PC-9 (cell line): ENCODE measurements at regions of chr1 and their contacts with region 1.

Region 1: GRCh38 chr1:190633488-190633887 is 155.8 kb upstream of the BRINP3 start:
- DNase-seq: no peak
- H3K4me3 ChIP-seq: no peak overlapping the region
- H3K27ac ChIP-seq: no peak overlapping the region
- H3K4me1 ChIP-seq: no peaks in the 10 kb centered on the region
- H3K27me3 ChIP-seq: no peaks in the 10 kb centered on the region
- CTCF ChIP-seq: no peak

Region 2: DNA sequence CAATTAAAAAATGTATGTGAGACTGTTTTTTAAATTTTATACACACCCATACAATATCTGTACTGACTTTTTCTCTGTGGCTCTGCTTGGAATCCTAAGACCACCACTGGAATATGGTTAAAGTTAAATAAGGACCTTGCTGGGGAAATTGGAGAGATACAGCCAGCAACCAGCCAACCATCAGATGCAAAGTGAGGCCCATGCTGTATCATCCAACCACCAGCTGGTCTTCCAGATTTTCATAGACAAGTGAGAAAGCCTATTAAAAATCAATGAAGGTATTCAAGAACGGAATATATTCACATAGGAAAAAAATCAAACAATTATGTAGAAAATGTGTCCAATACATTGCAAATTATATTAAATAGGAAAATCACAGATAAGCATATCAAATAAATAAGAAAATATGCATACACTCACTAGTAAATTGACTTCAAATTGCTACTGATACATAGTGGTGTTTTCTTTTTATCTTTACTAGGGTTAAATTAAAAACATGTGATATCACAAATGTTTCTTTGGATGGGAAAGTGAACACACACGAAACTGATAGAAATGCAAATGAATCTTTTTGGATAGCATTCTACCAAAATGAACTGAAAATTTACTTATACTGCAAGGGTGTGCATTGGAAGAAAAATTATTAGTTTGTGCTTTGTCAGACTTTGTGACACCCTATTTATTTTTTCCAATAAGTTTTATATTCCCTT is 1642.1 kb before region 1 on chr1:
- CTCF ChIA-PET with region 1: interaction called, 15 read pairs
- POLR2A ChIA-PET with region 1: no interaction called
- intact Hi-C with region 1: no loop called
- DNase-seq: no peak
- H3K4me3 ChIP-seq: no peak overlapping the region
- H3K27ac ChIP-seq: no peak overlapping the region
- H3K4me1 ChIP-seq: no peaks in the 10 kb centered on the region
- H3K27me3 ChIP-seq: no peaks in the 10 kb centered on the region
- CTCF ChIP-seq: no peak

Region 3: GRCh38 chr1:190416239-190416638 is 217.2 kb before region 1 on chr1:
- CTCF ChIA-PET with region 1: no interaction called
- POLR2A ChIA-PET with region 1: no interaction called
- intact Hi-C with region 1: no loop called
- DNase-seq: no peak
- H3K4me3 ChIP-seq: no peak overlapping the region
- H3K27ac ChIP-seq: no peak overlapping the region
- H3K4me1 ChIP-seq: no peaks in the 10 kb centered on the region
- H3K27me3 ChIP-seq: no peaks in the 10 kb centered on the region
- CTCF ChIP-seq: no peak